Ovary (tissue), 10 donors: ENCODE measurements at regions of chr1 and their contacts with region 1.

Region 1: GRCh38 chr1:116151739-116152576 is 40.8 kb downstream of the MAB21L3 start:
- DNase-seq: peak; percentile 61 to 84 (median 69)
- H3K4me3 ChIP-seq: peak overlapping the region; percentile 31
- H3K27ac ChIP-seq: peak overlapping the region in 1 of 2 donors; percentile 45
- H3K4me1 ChIP-seq: no peaks in the 10 kb centered on the region
- H3K27me3 ChIP-seq: no peaks in the 10 kb centered on the region
- CTCF ChIP-seq: peak; percentile 68 to 87 (median 80)
- EP300 ChIP-seq: no peak
- POLR2A ChIP-seq: no peak

Region 2: GRCh38 chr1:116492358-116492811 is 340.4 kb after region 1 on chr1:
- intact Hi-C with region 1: loop called in 3 of 4 experiments (anchors 5 kb)
- DNase-seq: no peak
- H3K4me3 ChIP-seq: no peak overlapping the region
- H3K27ac ChIP-seq: no peak overlapping the region
- H3K4me1 ChIP-seq: no peaks in the 10 kb centered on the region
- H3K27me3 ChIP-seq: no peaks in the 10 kb centered on the region
- CTCF ChIP-seq: no peak
- EP300 ChIP-seq: no peak
- POLR2A ChIP-seq: no peak

Region 3: GRCh38 chr1:116498789-116499628 is 347.1 kb after region 1 on chr1:
- intact Hi-C with region 1: loop called in 2 of 4 experiments (anchors 5 kb)
- DNase-seq: peak in 4 of 5 donors; percentile 13 to 45 (median 30)
- H3K4me3 ChIP-seq: no peak overlapping the region
- H3K27ac ChIP-seq: no peak overlapping the region
- H3K4me1 ChIP-seq: no peaks in the 10 kb centered on the region
- H3K27me3 ChIP-seq: no peaks in the 10 kb centered on the region
- CTCF ChIP-seq: peak; percentile 32 to 58 (median 48)
- EP300 ChIP-seq: no peak
- POLR2A ChIP-seq: no peak